ENCODE measurements at regions of chr21 and their contacts with region 1.

Region 1: DNA sequence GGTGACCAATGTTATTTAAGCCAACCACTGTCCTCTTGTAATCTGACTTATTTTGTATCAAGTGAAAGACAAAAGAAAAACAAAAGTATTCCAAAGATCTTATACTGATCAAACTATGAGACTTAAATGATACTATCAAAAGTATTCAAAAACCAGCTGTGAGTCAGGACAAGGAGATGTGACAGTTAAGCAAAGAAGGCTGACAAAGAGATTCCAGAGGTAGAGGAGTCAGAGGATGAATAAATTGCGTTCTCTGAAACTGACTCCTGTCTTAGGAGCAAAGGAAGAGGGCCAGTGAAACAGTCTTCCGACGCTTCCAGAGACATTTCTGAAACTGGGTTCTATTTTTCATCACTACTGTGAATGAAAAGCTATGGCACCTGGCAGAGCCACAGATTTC is 20.9 kb downstream of the TMEM50B start:
- DNase-seq: no peak
- H3K4me3 Mint-ChIP-seq: no peak overlapping the region
- H3K27ac Mint-ChIP-seq: no peak overlapping the region
- H3K4me1 Mint-ChIP-seq: no peaks in the 10 kb centered on the region
- H3K27me3 Mint-ChIP-seq: no peaks in the 10 kb centered on the region

Region 2: DNA sequence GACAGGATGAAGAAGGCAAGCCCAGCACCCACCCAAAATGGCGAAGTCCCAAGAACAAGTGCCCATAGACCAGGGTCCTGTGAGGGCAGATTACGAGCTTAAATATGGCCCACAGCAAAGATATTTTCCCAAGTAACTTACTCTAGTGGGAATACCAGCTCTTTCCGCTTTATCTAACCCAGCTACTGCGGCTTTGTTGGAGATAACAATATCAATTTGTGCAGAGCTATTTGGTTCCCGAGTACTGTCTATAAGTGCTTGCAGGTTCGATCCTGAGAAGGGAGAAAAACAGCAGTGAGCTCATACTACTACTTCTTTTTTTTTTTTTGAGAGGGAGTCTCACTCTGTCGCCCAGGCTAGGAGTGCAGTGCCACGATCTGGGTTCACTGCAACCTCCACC is 47.0 kb after region 1 on chr21:
- CTCF ChIA-PET with region 1: no interaction called
- POLR2A ChIA-PET with region 1: interaction called, 16 read pairs
- DNase-seq: no peak
- H3K4me3 Mint-ChIP-seq: no peak overlapping the region
- H3K27ac Mint-ChIP-seq: no peak overlapping the region
- H3K4me1 Mint-ChIP-seq: no peaks in the 10 kb centered on the region
- H3K27me3 Mint-ChIP-seq: no peaks in the 10 kb centered on the region

Region 3: DNA sequence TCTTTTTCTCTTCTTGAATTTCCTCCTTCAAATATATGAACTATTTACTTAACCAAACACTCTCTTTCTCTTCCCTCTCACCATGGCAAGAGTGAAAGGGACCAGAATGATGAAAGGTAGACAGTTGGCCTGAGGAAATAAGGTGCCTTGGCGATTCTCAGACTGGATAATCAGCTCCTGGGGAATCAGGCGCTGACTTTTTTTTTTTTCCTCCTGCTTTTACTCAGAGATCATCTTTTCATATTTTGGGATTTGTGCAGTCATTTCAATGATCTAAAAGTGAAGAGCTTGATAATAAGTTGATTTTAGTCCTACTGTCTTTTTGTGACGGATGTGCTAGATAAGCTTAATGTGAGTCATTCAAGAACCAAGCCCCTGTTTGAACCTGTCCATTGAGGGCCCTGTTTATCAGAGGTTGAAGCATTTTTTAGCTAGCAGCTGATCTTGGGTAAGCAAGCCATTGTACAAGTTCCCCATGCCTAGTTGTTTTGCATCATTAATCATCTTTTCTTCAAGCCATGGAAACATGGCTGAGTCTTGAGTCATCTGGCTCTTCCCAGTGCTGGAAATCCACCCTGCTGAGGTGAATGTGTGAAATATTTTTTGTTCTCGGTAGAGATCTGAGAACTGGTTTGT is 224.2 kb after region 1 on chr21:
- CTCF ChIA-PET with region 1: no interaction called
- POLR2A ChIA-PET with region 1: no interaction called
- DNase-seq: no peak
- H3K4me3 Mint-ChIP-seq: no peak overlapping the region
- H3K27ac Mint-ChIP-seq: no peak overlapping the region
- H3K4me1 Mint-ChIP-seq: no peaks in the 10 kb centered on the region
- H3K27me3 Mint-ChIP-seq: peaks cover 6% of the 10 kb centered on the region